Common myeloid progenitor, CD34-positive (primary cell): ENCODE measurements at regions of chr5 and their contacts with region 1.

Region 1: GRCh38 chr5:135426102-135427082 is 20.8 kb downstream of the DCANP1 start:
- DNase-seq: peak; percentile 80 to 89 (median 88)
- H3K4me3 ChIP-seq: peak overlapping the region in 3 of 7 experiments; percentile 9 to 52 (median 12)
- H3K27ac ChIP-seq: peak overlapping the region in 1 of 2 experiments; percentile 60
- H3K4me1 ChIP-seq: peaks cover 28 to 50% (median 46%) of the 10 kb centered on the region in 4 experiments
- H3K27me3 ChIP-seq: no peaks in the 10 kb centered on the region

Region 2: GRCh38 chr5:135271533-135272310 is 154.7 kb before region 1 on chr5:
- CTCF ChIA-PET with region 1: no interaction called
- POLR2A ChIA-PET with region 1: no interaction called
- DNase-seq: peak; percentile 51 to 88 (median 79)
- H3K4me3 ChIP-seq: no peak overlapping the region
- H3K27ac ChIP-seq: no peak overlapping the region
- H3K4me1 ChIP-seq: peaks cover 0 to 7% (median 3%) of the 10 kb centered on the region in 4 experiments
- H3K27me3 ChIP-seq: no peaks in the 10 kb centered on the region

Region 3: GRCh38 chr5:135356522-135357318 is 69.7 kb before region 1 on chr5:
- CTCF ChIA-PET with region 1: interaction called, 14 read pairs
- POLR2A ChIA-PET with region 1: interaction called, 4 read pairs
- DNase-seq: no peak
- H3K4me3 ChIP-seq: peak overlapping the region in 2 of 7 experiments; percentile 15 to 17
- H3K27ac ChIP-seq: peak overlapping the region in 1 of 2 experiments; percentile 46
- H3K4me1 ChIP-seq: peaks cover 13 to 92% (median 67%) of the 10 kb centered on the region in 4 experiments
- H3K27me3 ChIP-seq: no peaks in the 10 kb centered on the region

Region 4: GRCh38 chr5:135376961-135377624 is 49.3 kb before region 1 on chr5:
- CTCF ChIA-PET with region 1: interaction called, 108 read pairs
- POLR2A ChIA-PET with region 1: interaction called, 5 read pairs
- DNase-seq: peak; percentile 79 to 95 (median 93)
- H3K4me3 ChIP-seq: peak overlapping the region in 5 of 7 experiments; percentile 13 to 64 (median 51)
- H3K27ac ChIP-seq: peak overlapping the region; percentile 22 to 77
- H3K4me1 ChIP-seq: peaks cover 48 to 98% (median 95%) of the 10 kb centered on the region in 4 experiments
- H3K27me3 ChIP-seq: no peaks in the 10 kb centered on the region

Region 5: DNA sequence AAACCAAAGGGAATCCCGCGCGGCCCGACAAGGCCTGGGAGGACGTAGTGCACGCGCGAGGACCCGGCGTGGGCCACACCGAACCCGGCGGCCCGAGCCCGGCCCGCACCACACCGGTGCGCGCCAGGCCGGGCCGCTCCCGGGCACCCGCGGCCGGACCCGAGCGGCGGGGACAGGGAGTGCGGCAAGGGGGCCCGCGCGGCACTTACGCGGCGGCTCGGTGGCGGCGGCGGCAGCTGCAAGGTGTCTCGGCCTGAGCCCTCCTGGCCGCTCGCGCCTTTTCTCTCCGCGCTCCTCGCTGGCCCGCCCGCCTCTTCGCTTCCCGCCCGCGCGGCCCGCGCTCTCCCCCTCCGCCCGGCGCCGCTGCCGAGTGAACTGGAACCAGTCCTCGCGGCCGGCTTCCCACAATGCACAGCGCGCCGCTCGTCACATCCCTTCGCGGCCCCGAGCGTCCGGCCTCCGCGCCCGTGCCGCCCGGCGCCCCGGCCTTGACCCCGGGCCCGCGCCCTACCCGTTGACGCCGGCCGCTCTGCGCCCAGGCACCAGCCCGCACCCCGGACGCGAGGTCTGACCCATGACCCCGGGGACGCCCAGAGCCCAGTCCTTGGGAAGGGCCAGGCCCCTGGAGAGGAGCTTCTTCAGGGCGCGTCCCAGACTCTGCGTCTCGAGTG is 27.4 kb before region 1 on chr5 and contains the start of gene MACROH2A1:
- CTCF ChIA-PET with region 1: interaction called, 76 read pairs
- POLR2A ChIA-PET with region 1: interaction called, 6 read pairs
- DNase-seq: peak; percentile 78 to 86 (median 79)
- H3K4me3 ChIP-seq: peak within 1 kb of the TSS; percentile 66 to 93 (median 86)
- H3K27ac ChIP-seq: peak within 1 kb of the TSS; percentile 95 to 97
- H3K4me1 ChIP-seq: peaks cover 28 to 74% (median 61%) of the 10 kb centered on the region in 4 experiments
- H3K27me3 ChIP-seq: no peaks in the 10 kb centered on the region

Region 6: DNA sequence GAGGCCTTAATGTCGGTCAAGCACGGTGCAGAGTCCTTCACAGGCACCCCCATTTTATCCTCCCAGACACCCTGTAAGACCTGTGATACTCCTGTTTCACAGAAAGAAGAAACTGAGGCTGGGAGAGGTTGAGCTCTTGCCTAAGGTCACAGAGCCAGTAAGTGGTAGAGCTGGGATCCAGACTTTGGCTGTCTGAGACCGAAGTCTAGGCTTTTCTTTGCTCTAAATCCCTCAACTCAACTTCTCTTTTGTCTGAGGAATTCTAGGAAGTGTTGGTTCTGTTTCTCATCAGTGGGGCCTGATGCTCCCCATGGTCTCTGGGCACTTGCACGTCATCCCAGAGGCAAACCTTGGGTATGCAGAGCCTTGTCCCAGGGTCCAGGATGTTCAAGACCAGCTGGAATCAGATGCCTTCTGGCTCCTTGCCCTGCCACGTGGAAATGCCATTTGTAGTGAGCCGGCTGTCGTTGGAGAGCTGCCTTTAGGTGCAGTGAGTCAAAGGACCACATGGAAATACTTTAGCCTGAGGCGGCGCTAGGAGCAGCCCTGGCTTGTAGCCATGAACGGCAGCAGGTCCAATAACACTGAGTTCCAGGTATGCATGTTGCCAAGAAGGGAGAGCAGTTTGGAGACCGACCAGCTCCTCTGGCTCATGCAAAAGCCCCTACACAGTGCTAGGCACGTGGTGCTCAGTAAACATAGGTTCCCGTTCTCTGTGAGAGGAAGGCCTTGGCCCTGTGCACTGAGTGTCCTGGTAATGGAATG is 11.6 kb after region 1 on chr5:
- CTCF ChIA-PET with region 1: interaction called, 134 read pairs
- POLR2A ChIA-PET with region 1: no interaction called
- DNase-seq: no peak
- H3K4me3 ChIP-seq: peak overlapping the region in 1 of 7 experiments; percentile 43
- H3K27ac ChIP-seq: no peak overlapping the region
- H3K4me1 ChIP-seq: peaks cover 8 to 98% (median 75%) of the 10 kb centered on the region in 4 experiments
- H3K27me3 ChIP-seq: no peaks in the 10 kb centered on the region

Region 7: GRCh38 chr5:135466178-135467050 is 40.0 kb after region 1 on chr5:
- CTCF ChIA-PET with region 1: interaction called, 24 read pairs
- POLR2A ChIA-PET with region 1: no interaction called
- DNase-seq: peak; percentile 70 to 85 (median 82)
- H3K4me3 ChIP-seq: peak overlapping the region in 5 of 7 experiments; percentile 23 to 71 (median 58)
- H3K27ac ChIP-seq: no peak overlapping the region
- H3K4me1 ChIP-seq: peaks cover 0 to 21% (median 15%) of the 10 kb centered on the region in 4 experiments
- H3K27me3 ChIP-seq: peaks cover 2 to 47% (median 20%) of the 10 kb centered on the region in 5 experiments